Endothelial cell of umbilical vein (primary cell): ENCODE measurements at regions of chrX and their contacts with region 1.

Region 1: GRCh38 chrX:102899940-102900916 is 36.8 kb upstream of the RAB40AL start:
- DNase-seq: peak; percentile 72
- H3K4me3 ChIP-seq: no peak overlapping the region
- H3K27ac ChIP-seq: no peak overlapping the region
- H3K4me1 ChIP-seq: no peaks in the 10 kb centered on the region
- H3K27me3 ChIP-seq: no peaks in the 10 kb centered on the region
- CTCF ChIP-seq: peak; percentile 50 to 52
- POLR2A ChIP-seq: no peak

Region 2: GRCh38 chrX:102067966-102068708 is 832.1 kb before region 1 on chrX:
- CTCF ChIA-PET with region 1: interaction called, 9 read pairs
- POLR2A ChIA-PET with region 1: no interaction called
- dilution Hi-C with region 1: no loop called
- intact Hi-C with region 1: loop called (anchors 10 kb)
- DNase-seq: peak; percentile 17
- H3K4me3 ChIP-seq: no peak overlapping the region
- H3K27ac ChIP-seq: no peak overlapping the region
- H3K4me1 ChIP-seq: no peaks in the 10 kb centered on the region
- H3K27me3 ChIP-seq: no peaks in the 10 kb centered on the region
- CTCF ChIP-seq: peak in 1 of 2 donors; percentile 26
- POLR2A ChIP-seq: no peak

Region 3: GRCh38 chrX:102345916-102346315 is 554.3 kb before region 1 on chrX:
- CTCF ChIA-PET with region 1: interaction called, 15 read pairs
- POLR2A ChIA-PET with region 1: no interaction called
- dilution Hi-C with region 1: no loop called
- intact Hi-C with region 1: no loop called
- DNase-seq: peak; percentile 34
- H3K4me3 ChIP-seq: no peak overlapping the region
- H3K27ac ChIP-seq: no peak overlapping the region
- H3K4me1 ChIP-seq: no peaks in the 10 kb centered on the region
- H3K27me3 ChIP-seq: no peaks in the 10 kb centered on the region
- CTCF ChIP-seq: peak; percentile 29 to 53
- POLR2A ChIP-seq: no peak

Region 4: DNA sequence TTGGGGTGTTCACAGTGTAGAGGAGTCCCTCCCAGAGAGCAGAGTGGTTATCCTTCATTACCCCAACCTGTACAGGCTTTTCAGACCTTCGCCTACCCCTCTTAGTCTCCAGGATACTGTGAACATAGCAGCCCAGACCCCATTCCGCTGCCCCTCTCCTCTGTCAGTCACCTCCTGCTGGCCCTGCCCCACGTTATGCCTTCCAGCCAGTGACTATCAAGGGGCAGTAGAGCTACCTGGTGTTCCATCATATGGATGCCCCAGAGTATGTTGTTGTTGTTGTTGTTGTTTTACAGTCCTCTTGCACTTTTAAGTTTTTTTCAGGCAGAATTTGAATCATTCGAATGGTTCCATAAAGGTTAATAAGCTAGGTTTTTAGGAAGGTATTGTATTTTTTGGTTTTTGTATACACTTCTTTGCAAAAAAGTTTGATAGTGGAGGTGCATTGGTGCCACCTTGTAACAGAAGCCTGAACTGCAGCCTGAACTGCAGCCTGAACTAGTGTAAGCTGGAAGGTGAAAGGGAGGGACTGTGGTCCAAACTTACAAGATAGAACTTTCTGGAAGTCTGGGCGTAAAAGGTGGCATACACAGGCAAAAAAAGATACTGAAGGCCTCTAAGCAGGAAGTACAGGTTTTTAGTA is 64.6 kb before region 1 on chrX:
- CTCF ChIA-PET with region 1: interaction called, 13 read pairs
- POLR2A ChIA-PET with region 1: no interaction called
- dilution Hi-C with region 1: no loop called
- intact Hi-C with region 1: no loop called
- DNase-seq: peak; percentile 54
- H3K4me3 ChIP-seq: no peak overlapping the region
- H3K27ac ChIP-seq: no peak overlapping the region
- H3K4me1 ChIP-seq: peaks cover 3% of the 10 kb centered on the region
- H3K27me3 ChIP-seq: no peaks in the 10 kb centered on the region
- CTCF ChIP-seq: peak; percentile 39 to 53
- POLR2A ChIP-seq: no peak

Region 5: DNA sequence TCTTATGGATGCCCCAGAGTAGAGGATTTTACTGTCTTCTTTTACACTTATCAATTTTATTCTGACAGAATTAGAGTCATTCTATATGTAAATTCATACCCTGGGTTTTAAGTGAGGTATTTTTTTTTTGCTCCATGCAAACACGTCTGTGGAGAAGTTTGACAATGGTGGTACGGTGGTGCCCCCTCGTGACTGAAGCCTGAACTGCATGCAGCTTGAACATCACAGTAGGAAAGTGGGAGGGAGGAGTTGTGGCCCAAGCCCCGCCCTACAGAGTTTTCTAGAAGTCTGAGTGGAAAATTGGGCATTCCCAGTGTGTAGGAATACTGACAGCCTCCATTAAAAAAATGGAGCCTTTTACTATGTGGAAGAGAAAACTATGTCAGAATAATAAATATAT is 36.5 kb before region 1 on chrX:
- CTCF ChIA-PET with region 1: interaction called, 19 read pairs
- POLR2A ChIA-PET with region 1: no interaction called
- dilution Hi-C with region 1: no loop called
- intact Hi-C with region 1: no loop called
- DNase-seq: peak; percentile 87
- H3K4me3 ChIP-seq: no peak overlapping the region
- H3K27ac ChIP-seq: no peak overlapping the region
- H3K4me1 ChIP-seq: no peaks in the 10 kb centered on the region
- H3K27me3 ChIP-seq: no peaks in the 10 kb centered on the region
- CTCF ChIP-seq: peak; percentile 63 to 74
- POLR2A ChIP-seq: no peak

Region 6: GRCh38 chrX:102887687-102888086 is 12.5 kb before region 1 on chrX:
- CTCF ChIA-PET with region 1: interaction called, 23 read pairs
- POLR2A ChIA-PET with region 1: no interaction called
- dilution Hi-C with region 1: no loop called
- intact Hi-C with region 1: no loop called
- DNase-seq: no peak
- H3K4me3 ChIP-seq: no peak overlapping the region
- H3K27ac ChIP-seq: no peak overlapping the region
- H3K4me1 ChIP-seq: no peaks in the 10 kb centered on the region
- H3K27me3 ChIP-seq: no peaks in the 10 kb centered on the region
- CTCF ChIP-seq: no peak
- POLR2A ChIP-seq: no peak

Region 7: GRCh38 chrX:103017542-103017941 is 117.3 kb after region 1 on chrX:
- CTCF ChIA-PET with region 1: no interaction called
- POLR2A ChIA-PET with region 1: no interaction called
- dilution Hi-C with region 1: no loop called
- intact Hi-C with region 1: no loop called
- DNase-seq: no peak
- H3K4me3 ChIP-seq: no peak overlapping the region
- H3K27ac ChIP-seq: no peak overlapping the region
- H3K4me1 ChIP-seq: no peaks in the 10 kb centered on the region
- H3K27me3 ChIP-seq: no peaks in the 10 kb centered on the region
- CTCF ChIP-seq: no peak
- POLR2A ChIP-seq: no peak